Activated CD4-positive, alpha-beta T cell treated with anti-CD3 and anti-CD28 coated beads for 36 hours (primary cell): ENCODE measurements at regions of chr19 and their contacts with region 1.

Region 1: DNA sequence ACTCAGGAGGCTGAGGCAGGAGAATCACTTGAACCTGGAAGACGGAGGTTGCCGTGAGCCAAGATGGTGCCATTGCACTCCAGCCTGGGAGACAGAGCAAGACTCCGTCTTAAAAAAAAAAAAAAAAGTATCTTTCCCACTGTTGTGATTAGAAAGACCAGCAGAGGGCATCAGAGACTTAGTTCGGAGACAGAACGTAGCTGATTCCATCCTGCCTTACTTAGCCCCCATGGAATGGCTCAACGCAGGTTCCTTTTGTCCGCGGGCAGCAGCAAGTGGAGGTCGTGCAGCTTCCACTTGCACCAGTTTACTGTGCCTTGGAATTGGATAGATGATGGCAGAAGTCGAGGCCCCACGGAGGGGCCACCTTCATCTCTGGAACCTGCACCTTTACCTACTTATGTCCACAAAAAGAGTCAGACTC is 8.1 kb downstream of the TIMM29 start:
- DNase-seq: peak; percentile 49
- ATAC-seq: peak; percentile 90
- H3K4me3 Mint-ChIP-seq: no peak overlapping the region
- H3K27ac Mint-ChIP-seq: no peak overlapping the region
- H3K4me1 Mint-ChIP-seq: peaks cover 2% of the 10 kb centered on the region
- H3K27me3 Mint-ChIP-seq: no peaks in the 10 kb centered on the region

Region 2: DNA sequence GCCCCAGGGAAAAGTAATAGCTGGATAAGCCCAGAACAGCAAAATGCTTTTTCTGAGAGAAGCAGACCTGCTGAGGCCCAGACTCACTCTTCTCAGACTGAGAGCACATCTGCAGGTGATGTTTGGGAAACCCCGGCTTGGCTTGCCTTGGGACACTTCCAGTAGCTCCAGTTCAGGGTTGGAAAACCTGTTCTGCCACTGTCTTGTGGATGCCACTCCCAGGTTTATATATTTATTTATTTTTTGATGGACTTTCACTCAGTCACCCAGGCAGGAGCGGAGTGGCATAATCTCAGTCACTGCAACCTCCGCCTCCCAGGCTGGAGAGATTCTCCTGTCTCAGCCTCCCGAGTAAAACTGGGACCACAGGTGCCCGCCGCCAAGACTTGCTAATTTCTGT is 16.1 kb after region 1 on chr19:
- CTCF ChIA-PET with region 1: interaction called, 24 read pairs
- POLR2A ChIA-PET with region 1: no interaction called
- intact Hi-C with region 1: no loop called
- DNase-seq: no peak
- ATAC-seq: no peak
- H3K4me3 Mint-ChIP-seq: no peak overlapping the region
- H3K27ac Mint-ChIP-seq: no peak overlapping the region
- H3K4me1 Mint-ChIP-seq: peaks cover 5% of the 10 kb centered on the region
- H3K27me3 Mint-ChIP-seq: no peaks in the 10 kb centered on the region

Region 3: GRCh38 chr19:10971107-10971726 is 34.5 kb after region 1 on chr19:
- CTCF ChIA-PET with region 1: interaction called, 12 read pairs
- POLR2A ChIA-PET with region 1: interaction called, 3 read pairs
- intact Hi-C with region 1: loop called in 1 of 2 experiments (anchors 5 kb)
- DNase-seq: no peak
- ATAC-seq: no peak
- H3K4me3 Mint-ChIP-seq: no peak overlapping the region
- H3K27ac Mint-ChIP-seq: no peak overlapping the region
- H3K4me1 Mint-ChIP-seq: peaks cover 39% of the 10 kb centered on the region
- H3K27me3 Mint-ChIP-seq: no peaks in the 10 kb centered on the region

Region 4: DNA sequence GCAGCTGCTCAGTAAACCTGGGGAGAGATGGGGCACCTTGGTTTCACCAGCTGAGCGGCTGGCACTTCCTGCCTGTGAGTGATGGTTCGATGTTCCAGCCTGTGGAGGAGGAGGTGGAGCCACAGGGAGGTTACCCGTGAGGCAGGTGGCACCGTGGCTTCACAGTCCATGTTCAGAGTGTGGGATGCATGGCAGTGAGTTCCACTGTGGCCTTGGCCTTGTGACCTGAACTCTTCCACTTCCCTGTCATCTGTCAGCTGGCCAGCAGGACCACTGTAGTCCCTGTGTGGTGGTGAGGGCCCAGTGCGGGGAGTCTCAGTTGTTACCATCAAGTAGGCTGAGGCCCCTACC is 41.0 kb after region 1 on chr19:
- CTCF ChIA-PET with region 1: interaction called, 10 read pairs
- POLR2A ChIA-PET with region 1: interaction called, 3 read pairs
- intact Hi-C with region 1: loop called in 1 of 2 experiments (anchors 5 kb)
- DNase-seq: peak; percentile 25
- ATAC-seq: peak; percentile 25
- H3K4me3 Mint-ChIP-seq: no peak overlapping the region
- H3K27ac Mint-ChIP-seq: peak overlapping the region; percentile 38
- H3K4me1 Mint-ChIP-seq: peaks cover 43% of the 10 kb centered on the region
- H3K27me3 Mint-ChIP-seq: no peaks in the 10 kb centered on the region

Region 5: DNA sequence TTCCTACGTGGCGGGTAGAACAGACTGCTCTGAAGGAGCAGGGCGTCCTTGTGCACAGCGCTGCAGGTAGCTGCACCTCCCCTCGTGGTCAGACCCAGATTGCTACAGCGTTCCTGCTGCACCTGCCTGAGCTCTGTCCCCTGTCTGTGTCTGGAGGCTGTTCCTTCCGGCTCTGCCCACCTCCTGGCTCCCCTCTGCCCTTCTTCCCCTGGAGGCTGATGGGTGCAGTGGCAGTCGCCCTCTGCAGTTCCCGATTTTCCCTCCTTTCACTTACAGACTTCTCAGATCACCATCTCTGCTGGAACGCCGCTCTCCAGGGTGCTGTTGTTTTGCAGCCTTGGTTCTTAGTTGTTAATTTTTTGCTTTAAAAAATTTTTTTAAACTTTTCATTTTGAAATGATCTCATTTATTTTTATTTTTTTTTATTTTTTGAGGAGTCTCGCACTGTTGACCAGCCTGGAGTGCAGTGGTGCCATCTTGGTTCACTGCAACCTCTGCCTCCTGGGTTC is 77.8 kb after region 1 on chr19:
- CTCF ChIA-PET with region 1: interaction called, 6 read pairs
- POLR2A ChIA-PET with region 1: no interaction called
- intact Hi-C with region 1: loop called (anchors 5 kb)
- DNase-seq: no peak
- ATAC-seq: no peak
- H3K4me3 Mint-ChIP-seq: no peak overlapping the region
- H3K27ac Mint-ChIP-seq: no peak overlapping the region
- H3K4me1 Mint-ChIP-seq: no peaks in the 10 kb centered on the region
- H3K27me3 Mint-ChIP-seq: no peaks in the 10 kb centered on the region

Region 6: DNA sequence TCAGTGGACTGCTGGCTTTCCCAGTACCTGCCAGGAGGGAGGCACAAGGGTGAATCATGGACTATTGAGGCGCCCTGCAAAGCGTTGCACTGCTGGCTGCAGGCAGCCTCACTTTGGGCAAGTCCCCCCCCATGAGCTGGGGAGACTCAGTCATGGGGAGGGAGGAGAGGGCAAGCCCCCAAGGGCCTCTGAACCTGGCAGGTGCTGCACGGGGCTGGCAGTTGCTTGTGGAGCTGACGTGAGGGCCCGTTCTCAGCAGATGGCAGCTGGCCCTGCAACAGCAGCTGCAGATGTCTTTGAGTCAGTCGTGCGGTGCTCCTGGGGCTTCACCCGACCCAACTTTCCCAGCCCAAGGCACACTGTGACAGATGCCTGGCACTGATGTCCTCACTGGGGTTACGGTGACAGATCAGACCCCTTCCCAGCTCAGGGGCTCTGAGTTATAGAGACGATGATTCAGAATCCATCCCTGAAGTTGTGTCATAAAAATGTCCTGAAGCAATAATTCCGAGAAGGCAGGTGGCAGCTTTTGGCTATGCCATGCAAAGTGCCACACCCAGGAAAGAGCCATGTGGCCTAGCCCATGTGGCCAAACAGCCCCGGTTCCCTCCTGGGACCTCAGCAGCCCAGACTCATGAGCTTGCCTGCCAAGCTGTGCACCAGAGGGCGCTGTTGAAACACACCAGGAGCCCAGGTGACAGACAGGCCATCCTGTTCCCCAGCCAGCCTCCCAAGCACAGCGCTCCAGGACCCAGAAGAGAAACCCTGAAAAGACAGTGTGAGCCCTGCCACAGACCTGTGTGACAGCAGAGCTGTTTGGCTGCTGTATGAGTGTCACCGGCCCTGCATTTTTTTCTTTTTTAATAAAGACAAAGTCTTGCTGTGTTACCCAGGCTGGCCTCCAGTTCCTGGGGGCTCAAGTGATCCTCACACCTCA is 99.0 kb after region 1 on chr19:
- CTCF ChIA-PET with region 1: interaction called, 16 read pairs
- POLR2A ChIA-PET with region 1: interaction called, 13 read pairs
- intact Hi-C with region 1: loop called in 1 of 2 experiments (anchors 5 kb)
- DNase-seq: peak; percentile 94
- ATAC-seq: peak; percentile 99
- H3K4me3 Mint-ChIP-seq: no peak overlapping the region
- H3K27ac Mint-ChIP-seq: peak overlapping the region; percentile 9
- H3K4me1 Mint-ChIP-seq: peaks cover 6% of the 10 kb centered on the region
- H3K27me3 Mint-ChIP-seq: no peaks in the 10 kb centered on the region

Region 7: GRCh38 chr19:11115895-11116446 is 179.3 kb after region 1 on chr19:
- CTCF ChIA-PET with region 1: no interaction called
- POLR2A ChIA-PET with region 1: no interaction called
- intact Hi-C with region 1: no loop called
- DNase-seq: no peak
- ATAC-seq: no peak
- H3K4me3 Mint-ChIP-seq: no peak overlapping the region
- H3K27ac Mint-ChIP-seq: no peak overlapping the region
- H3K4me1 Mint-ChIP-seq: no peaks in the 10 kb centered on the region
- H3K27me3 Mint-ChIP-seq: no peaks in the 10 kb centered on the region

Region 8: GRCh38 chr19:11125994-11126685 is 189.5 kb after region 1 on chr19:
- CTCF ChIA-PET with region 1: interaction called, 9 read pairs
- POLR2A ChIA-PET with region 1: no interaction called
- intact Hi-C with region 1: loop called in 1 of 2 experiments (anchors 2 kb)
- DNase-seq: peak; percentile 88
- ATAC-seq: peak; percentile 78
- H3K4me3 Mint-ChIP-seq: no peak overlapping the region
- H3K27ac Mint-ChIP-seq: no peak overlapping the region
- H3K4me1 Mint-ChIP-seq: no peaks in the 10 kb centered on the region
- H3K27me3 Mint-ChIP-seq: no peaks in the 10 kb centered on the region